Stomach (tissue), 19 donors: ENCODE measurements at regions of chr5 and their contacts with region 1.

Region 1: DNA sequence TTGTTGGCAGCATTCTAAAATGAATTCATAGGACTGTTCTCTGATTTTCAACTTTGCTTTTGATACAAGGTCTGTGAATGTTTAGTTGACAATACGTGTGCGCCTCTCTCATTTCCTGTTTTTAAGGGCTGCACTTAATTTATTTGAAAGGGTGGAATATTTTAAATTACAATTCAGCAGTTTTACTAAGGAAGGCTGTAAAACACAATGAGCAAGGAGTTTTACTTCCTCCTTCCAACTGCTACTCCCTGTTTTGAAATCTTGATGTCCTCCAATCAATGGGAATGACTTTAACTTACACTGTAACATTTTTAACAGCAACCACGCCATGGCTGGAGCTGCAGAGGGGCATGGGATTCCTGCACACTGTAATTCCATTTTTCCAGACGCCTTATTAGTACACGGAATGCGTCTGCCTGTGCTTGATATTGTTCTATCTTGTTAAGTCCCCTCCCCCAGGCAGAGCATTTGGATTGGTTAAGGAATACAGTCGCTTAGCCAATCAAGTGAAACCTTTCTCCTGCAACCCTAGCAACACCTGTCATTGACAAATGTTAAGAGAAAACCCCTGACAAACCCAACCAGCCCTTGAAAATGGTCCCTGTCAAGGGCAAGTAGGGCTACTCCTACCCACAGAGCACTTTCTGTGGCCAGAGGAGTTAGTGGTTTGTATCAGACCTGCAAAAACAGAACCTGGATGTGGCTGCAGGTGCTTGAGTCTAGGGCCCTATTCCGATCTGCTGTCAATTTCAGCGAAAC is 12.5 kb upstream of the ZSWIM6 start:
- DNase-seq: peak in 1 of 2 donors; percentile 68
- H3K4me3 ChIP-seq: no peak overlapping the region
- H3K27ac ChIP-seq: peak overlapping the region; percentile 5 to 51 (median 42)
- H3K4me1 ChIP-seq: peaks cover 5 to 41% (median 19%) of the 10 kb centered on the region in 4 donors
- H3K27me3 ChIP-seq: no peaks in the 10 kb centered on the region
- CTCF ChIP-seq: no peak
- EP300 ChIP-seq: no peak
- POLR2A ChIP-seq: no peak

Region 2: DNA sequence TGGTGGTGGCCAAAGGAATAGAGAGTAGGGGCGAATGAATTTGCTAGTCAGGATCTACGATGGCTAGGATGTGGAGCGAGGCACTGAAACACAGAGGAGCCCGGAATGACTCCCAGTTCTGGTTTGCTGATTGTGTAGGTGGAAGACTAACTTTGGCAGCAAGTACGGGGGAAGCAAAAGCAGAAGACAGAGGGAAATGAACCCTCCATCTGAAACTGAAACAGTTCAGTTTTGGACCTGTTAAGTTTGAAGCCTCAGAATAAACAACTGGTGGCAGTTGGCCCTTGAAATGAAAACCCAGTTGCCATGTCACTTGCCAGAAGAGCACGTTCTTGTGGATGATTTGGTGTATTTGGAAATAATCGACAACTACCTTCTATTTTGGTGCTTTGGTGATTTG is 141.9 kb before region 1 on chr5:
- intact Hi-C with region 1: loop called (anchors 10 kb)
- DNase-seq: no peak
- H3K4me3 ChIP-seq: no peak overlapping the region
- H3K27ac ChIP-seq: no peak overlapping the region
- H3K4me1 ChIP-seq: peaks cover 0 to 14% (median 0%) of the 10 kb centered on the region in 4 donors
- H3K27me3 ChIP-seq: no peaks in the 10 kb centered on the region
- CTCF ChIP-seq: no peak
- EP300 ChIP-seq: no peak
- POLR2A ChIP-seq: no peak

Region 3: DNA sequence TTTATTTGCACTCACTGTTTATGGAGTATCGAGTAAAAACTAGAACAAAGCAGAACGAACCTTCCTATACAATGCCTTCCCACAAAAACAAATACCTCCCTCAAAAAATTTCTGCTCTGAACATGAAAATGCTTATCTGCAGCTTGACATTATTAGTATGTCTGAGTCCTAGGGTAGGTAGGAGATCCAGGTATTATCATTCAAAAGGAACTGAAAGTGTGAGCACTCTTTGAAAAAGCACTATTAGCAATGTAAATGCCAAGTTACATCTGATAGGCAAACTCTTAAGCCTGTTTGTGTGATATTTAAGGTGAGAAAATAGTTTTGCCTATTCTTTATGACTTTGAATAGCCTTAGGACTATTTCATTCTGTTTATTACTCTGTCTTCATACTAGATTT is 60.1 kb after region 1 on chr5:
- intact Hi-C with region 1: no loop called
- DNase-seq: no peak
- H3K4me3 ChIP-seq: no peak overlapping the region
- H3K27ac ChIP-seq: no peak overlapping the region
- H3K4me1 ChIP-seq: peaks cover 0 to 25% (median 0%) of the 10 kb centered on the region in 4 donors
- H3K27me3 ChIP-seq: no peaks in the 10 kb centered on the region
- CTCF ChIP-seq: no peak
- EP300 ChIP-seq: no peak
- POLR2A ChIP-seq: no peak